Esophagus squamous epithelium (tissue), 5 donors: ENCODE measurements at regions of chr3 and their contacts with region 1.

Region 1: GRCh38 chr3:151146071-151146730 is 56.8 kb downstream of the GPR171 start:
- DNase-seq: no peak
- H3K4me3 ChIP-seq: peak overlapping the region in 1 of 4 donors; percentile 16
- H3K27ac ChIP-seq: no peak overlapping the region
- H3K4me1 ChIP-seq: peaks cover 0 to 15% (median 11%) of the 10 kb centered on the region in 3 donors
- H3K27me3 ChIP-seq: peaks cover 0 to 11% (median 0%) of the 10 kb centered on the region in 4 donors
- CTCF ChIP-seq: peak; percentile 74 to 85 (median 80)
- POLR2A ChIP-seq: no peak

Region 2: GRCh38 chr3:150721285-150722130 is 424.7 kb before region 1 on chr3:
- intact Hi-C with region 1: loop called (anchors 5 kb)
- DNase-seq: no peak
- H3K4me3 ChIP-seq: no peak overlapping the region
- H3K27ac ChIP-seq: no peak overlapping the region
- H3K4me1 ChIP-seq: peaks cover 7 to 48% (median 20%) of the 10 kb centered on the region in 3 donors
- H3K27me3 ChIP-seq: no peaks in the 10 kb centered on the region
- CTCF ChIP-seq: peak; percentile 54 to 92 (median 85)
- POLR2A ChIP-seq: no peak

Region 3: DNA sequence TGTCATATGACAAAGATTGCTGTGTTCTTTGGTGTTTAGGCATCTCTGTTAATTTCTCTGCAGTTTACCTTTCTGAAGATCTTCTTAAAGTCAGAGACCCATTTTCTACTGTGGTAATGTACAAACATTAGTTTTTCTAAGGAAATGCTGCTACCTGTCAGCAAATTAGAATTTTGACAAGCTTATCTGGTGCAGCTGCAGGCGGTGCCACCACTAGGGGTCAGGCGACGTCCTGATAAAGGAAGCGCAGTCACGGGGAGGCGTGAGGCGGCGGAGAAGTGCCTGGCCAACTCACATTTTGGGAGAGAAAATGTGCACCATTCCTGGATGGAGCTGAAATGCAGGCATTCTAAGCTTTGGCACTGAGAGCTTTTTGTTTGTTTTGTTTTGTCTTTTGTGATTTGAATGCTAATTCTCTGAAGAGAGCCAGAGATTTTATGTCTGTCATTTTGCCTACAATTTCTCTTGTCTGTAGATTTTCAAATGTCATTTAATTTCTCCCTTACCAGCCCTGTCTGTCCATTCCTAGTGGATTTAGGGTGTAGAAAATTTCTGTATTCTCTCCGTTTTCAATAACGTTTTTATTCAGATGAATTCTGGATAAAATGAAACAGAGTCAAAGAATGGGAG is 358.3 kb before region 1 on chr3:
- intact Hi-C with region 1: loop called (anchors 5 kb)
- DNase-seq: no peak
- H3K4me3 ChIP-seq: no peak overlapping the region
- H3K27ac ChIP-seq: no peak overlapping the region
- H3K4me1 ChIP-seq: peaks cover 0 to 13% (median 0%) of the 10 kb centered on the region in 3 donors
- H3K27me3 ChIP-seq: peaks cover 0 to 8% (median 0%) of the 10 kb centered on the region in 4 donors
- CTCF ChIP-seq: peak; percentile 69 to 92 (median 84)
- POLR2A ChIP-seq: no peak

Region 4: DNA sequence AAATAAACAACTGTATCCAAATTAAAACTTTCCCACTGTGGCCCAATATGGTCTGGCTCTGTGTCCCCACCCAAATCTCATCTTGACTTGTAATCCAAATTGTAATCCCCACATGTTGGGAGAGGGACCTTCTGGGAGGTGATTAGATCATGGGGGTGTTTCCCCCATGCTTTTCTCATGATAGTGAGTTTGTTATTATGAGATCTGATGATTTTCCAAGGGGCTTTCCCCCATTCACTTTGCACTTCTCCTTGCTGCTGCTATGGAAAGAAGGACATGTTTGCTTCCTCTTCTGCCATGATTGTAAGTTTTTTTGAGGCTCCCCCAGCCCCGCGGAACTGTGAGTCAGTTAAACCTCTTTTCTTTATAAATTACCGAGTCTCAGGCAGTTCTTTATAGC is 296.0 kb before region 1 on chr3:
- intact Hi-C with region 1: no loop called
- DNase-seq: no peak
- H3K4me3 ChIP-seq: no peak overlapping the region
- H3K27ac ChIP-seq: no peak overlapping the region
- H3K4me1 ChIP-seq: no peaks in the 10 kb centered on the region
- H3K27me3 ChIP-seq: peaks cover 0 to 8% (median 0%) of the 10 kb centered on the region in 4 donors
- CTCF ChIP-seq: no peak
- POLR2A ChIP-seq: no peak

Region 5: GRCh38 chr3:151047636-151048035 is 98.6 kb before region 1 on chr3:
- intact Hi-C with region 1: no loop called
- DNase-seq: no peak
- H3K4me3 ChIP-seq: no peak overlapping the region
- H3K27ac ChIP-seq: no peak overlapping the region
- H3K4me1 ChIP-seq: no peaks in the 10 kb centered on the region
- H3K27me3 ChIP-seq: peaks cover 0 to 30% (median 0%) of the 10 kb centered on the region in 4 donors
- CTCF ChIP-seq: no peak
- POLR2A ChIP-seq: no peak

Region 6: GRCh38 chr3:151248772-151249337 is 102.7 kb after region 1 on chr3:
- intact Hi-C with region 1: no loop called
- DNase-seq: no peak
- H3K4me3 ChIP-seq: peak overlapping the region in 1 of 4 donors; percentile 19
- H3K27ac ChIP-seq: peak overlapping the region in 1 of 4 donors; percentile 65
- H3K4me1 ChIP-seq: no peaks in the 10 kb centered on the region
- H3K27me3 ChIP-seq: no peaks in the 10 kb centered on the region
- CTCF ChIP-seq: no peak
- POLR2A ChIP-seq: no peak

Region 7: DNA sequence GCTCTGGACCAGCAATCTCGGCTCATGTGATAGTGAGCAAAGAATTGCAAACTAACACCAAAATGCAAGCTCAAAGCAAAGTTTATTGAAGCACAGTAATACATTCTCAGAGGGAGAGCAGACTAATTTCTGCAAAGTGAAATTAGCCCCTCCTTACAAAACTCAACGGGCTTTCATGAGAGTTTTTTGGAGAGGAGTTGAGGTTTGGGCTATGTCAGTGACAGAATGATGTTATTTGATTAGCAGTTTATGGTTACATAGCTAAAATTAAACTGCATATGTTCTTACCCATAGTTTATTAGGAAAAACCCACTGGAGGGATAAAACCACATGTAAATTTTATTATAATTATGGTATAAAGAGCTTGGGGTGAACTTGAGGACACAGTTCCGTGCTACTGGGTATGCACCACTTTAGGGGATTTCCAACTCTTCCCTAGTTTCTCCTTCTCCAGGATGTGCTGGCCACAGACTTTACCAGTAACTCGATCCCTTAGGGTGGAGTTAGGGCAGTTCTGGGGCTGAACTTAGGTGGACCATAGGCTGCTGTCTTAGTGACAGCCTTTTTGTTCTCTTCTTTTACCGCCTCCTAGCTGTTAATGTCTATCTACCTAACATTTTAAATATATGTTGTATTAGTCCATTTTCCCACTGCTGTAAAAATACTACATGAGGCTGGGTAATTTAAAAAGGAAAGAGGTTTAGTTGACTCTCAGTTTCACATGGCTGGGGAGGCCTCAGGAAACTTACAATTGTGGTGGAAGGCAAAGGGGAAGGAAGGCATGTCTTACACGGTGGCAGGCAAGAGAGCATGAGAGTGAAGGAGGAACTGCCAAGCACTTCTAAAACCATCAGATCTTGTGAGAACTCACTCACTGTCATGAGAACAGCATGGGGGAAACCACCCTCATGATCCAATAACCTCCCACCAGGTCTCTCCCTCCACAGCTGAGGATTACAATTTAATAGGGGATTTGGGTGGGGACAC is 578.7 kb after region 1 on chr3:
- intact Hi-C with region 1: no loop called
- DNase-seq: no peak
- H3K4me3 ChIP-seq: no peak overlapping the region
- H3K27ac ChIP-seq: no peak overlapping the region
- H3K4me1 ChIP-seq: no peaks in the 10 kb centered on the region
- H3K27me3 ChIP-seq: no peaks in the 10 kb centered on the region
- CTCF ChIP-seq: no peak
- POLR2A ChIP-seq: no peak